ENCODE measurements at regions of chr18 and their contacts with region 1.

Region 1: DNA sequence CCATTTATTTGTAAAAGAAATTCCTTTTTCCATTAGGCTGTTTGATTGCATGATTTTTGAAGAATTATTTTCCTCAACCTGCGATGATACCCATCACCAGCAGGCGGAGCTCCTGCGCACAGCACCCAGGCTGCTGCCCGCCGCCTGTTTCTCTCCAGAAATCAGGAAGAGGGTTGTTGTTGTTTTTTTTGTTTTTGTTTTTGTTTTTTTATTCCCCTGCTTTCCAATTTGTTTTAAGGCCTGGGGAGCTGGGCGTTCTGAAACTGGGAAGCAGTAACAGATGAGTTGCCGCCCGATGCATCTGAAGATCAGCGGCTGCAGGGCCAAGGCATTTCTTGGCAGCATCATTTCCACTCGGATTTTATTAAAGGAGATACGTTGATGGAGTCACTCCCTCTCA is 132.1 kb downstream of the MBP start:
- DNase-seq: peak; percentile 24 to 71 (median 52)
- ATAC-seq: peak; percentile 66
- H3K4me3 ChIP-seq: no peak overlapping the region
- H3K4me3 Mint-ChIP-seq: no peak overlapping the region
- H3K27ac ChIP-seq: no peak overlapping the region
- H3K27ac Mint-ChIP-seq: no peak overlapping the region
- H3K4me1 ChIP-seq: peaks cover 19% of the 10 kb centered on the region
- H3K4me1 Mint-ChIP-seq: peaks cover 27% of the 10 kb centered on the region
- H3K27me3 ChIP-seq: no peaks in the 10 kb centered on the region
- H3K27me3 Mint-ChIP-seq: no peaks in the 10 kb centered on the region
- CTCF ChIP-seq: peak; percentile 97

Region 2: GRCh38 chr18:76265497-76266235 is 734.9 kb before region 1 on chr18:
- CTCF ChIA-PET with region 1: no interaction called
- POLR2A ChIA-PET with region 1: no interaction called
- intact Hi-C with region 1: no loop called
- DNase-seq: no peak
- ATAC-seq: no peak
- H3K4me3 ChIP-seq: no peak overlapping the region
- H3K4me3 Mint-ChIP-seq: no peak overlapping the region
- H3K27ac ChIP-seq: no peak overlapping the region
- H3K27ac Mint-ChIP-seq: no peak overlapping the region
- H3K4me1 ChIP-seq: no peaks in the 10 kb centered on the region
- H3K4me1 Mint-ChIP-seq: no peaks in the 10 kb centered on the region
- H3K27me3 ChIP-seq: no peaks in the 10 kb centered on the region
- H3K27me3 Mint-ChIP-seq: peaks cover 14% of the 10 kb centered on the region
- CTCF ChIP-seq: no peak

Region 3: GRCh38 chr18:77013811-77014521 is 13.4 kb after region 1 on chr18:
- CTCF ChIA-PET with region 1: interaction called, 30 read pairs
- POLR2A ChIA-PET with region 1: no interaction called
- intact Hi-C with region 1: no loop called
- DNase-seq: no peak
- ATAC-seq: no peak
- H3K4me3 ChIP-seq: no peak overlapping the region
- H3K4me3 Mint-ChIP-seq: no peak overlapping the region
- H3K27ac ChIP-seq: no peak overlapping the region
- H3K27ac Mint-ChIP-seq: peak overlapping the region; percentile 33
- H3K4me1 ChIP-seq: no peaks in the 10 kb centered on the region
- H3K4me1 Mint-ChIP-seq: peaks cover 37% of the 10 kb centered on the region
- H3K27me3 ChIP-seq: no peaks in the 10 kb centered on the region
- H3K27me3 Mint-ChIP-seq: no peaks in the 10 kb centered on the region
- CTCF ChIP-seq: no peak

Region 4: GRCh38 chr18:77054606-77055428 is 54.3 kb after region 1 on chr18:
- CTCF ChIA-PET with region 1: interaction called, 42 read pairs
- POLR2A ChIA-PET with region 1: interaction called, 4 read pairs
- intact Hi-C with region 1: loop called (anchors 1 kb)
- DNase-seq: peak; percentile 68 to 94 (median 86)
- ATAC-seq: peak; percentile 78
- H3K4me3 ChIP-seq: peak overlapping the region; percentile 35 to 44
- H3K4me3 Mint-ChIP-seq: peak overlapping the region; percentile 71
- H3K27ac ChIP-seq: peak overlapping the region; percentile 80 to 95
- H3K27ac Mint-ChIP-seq: peak overlapping the region; percentile 98
- H3K4me1 ChIP-seq: peaks cover 64% of the 10 kb centered on the region
- H3K4me1 Mint-ChIP-seq: peaks cover 69% of the 10 kb centered on the region
- H3K27me3 ChIP-seq: no peaks in the 10 kb centered on the region
- H3K27me3 Mint-ChIP-seq: no peaks in the 10 kb centered on the region
- CTCF ChIP-seq: peak; percentile 53

Region 5: DNA sequence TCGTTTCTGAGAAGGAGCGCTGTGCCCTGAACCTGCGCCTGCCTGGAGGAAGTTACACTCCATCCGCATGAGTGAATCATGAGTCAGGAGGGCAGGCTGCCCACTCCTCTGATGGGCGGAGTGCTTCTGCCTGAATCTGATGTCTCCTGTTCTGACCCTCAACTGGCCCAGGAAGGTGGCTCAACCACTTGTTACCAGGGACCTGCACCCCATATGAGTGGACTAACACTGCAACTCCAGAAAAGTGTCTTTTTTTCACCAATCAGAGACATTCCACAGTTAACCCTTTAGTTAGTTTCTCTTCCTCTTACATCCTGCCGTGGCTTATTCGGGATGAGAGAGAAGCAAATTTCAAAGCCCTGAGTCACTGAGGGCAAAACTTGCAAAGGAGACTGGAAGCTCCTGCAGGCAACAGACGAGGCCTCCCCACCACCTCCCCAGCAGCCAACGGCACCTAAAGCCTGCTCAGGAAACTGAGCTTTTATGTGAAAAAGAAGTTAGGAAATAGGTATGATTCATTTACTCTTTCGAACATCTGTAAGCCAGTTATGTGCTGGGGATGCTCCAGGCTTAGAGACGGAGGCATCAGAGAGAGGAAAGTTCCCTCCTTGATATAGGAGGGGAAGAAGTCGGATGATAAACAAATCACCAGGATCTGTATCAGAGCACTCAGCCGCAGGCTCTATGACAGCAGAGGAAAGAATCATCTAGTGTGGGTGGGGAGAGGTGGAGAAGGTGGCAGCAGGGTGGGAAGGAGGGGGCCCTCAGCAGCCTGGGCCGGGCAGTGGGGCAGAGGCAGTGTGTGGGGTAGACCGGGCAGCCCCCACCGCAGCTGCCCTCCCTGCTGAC is 101.1 kb after region 1 on chr18:
- CTCF ChIA-PET with region 1: interaction called, 13 read pairs
- POLR2A ChIA-PET with region 1: no interaction called
- intact Hi-C with region 1: no loop called
- DNase-seq: peak in 7 of 9 experiments; percentile 28 to 74 (median 54)
- ATAC-seq: peak; percentile 15
- H3K4me3 ChIP-seq: peak overlapping the region; percentile 16 to 26
- H3K4me3 Mint-ChIP-seq: peak overlapping the region; percentile 79
- H3K27ac ChIP-seq: peak overlapping the region; percentile 63 to 87
- H3K27ac Mint-ChIP-seq: peak overlapping the region; percentile 99
- H3K4me1 ChIP-seq: peaks cover 94% of the 10 kb centered on the region
- H3K4me1 Mint-ChIP-seq: peaks cover 94% of the 10 kb centered on the region
- H3K27me3 ChIP-seq: no peaks in the 10 kb centered on the region
- H3K27me3 Mint-ChIP-seq: no peaks in the 10 kb centered on the region
- CTCF ChIP-seq: no peak

Region 6: DNA sequence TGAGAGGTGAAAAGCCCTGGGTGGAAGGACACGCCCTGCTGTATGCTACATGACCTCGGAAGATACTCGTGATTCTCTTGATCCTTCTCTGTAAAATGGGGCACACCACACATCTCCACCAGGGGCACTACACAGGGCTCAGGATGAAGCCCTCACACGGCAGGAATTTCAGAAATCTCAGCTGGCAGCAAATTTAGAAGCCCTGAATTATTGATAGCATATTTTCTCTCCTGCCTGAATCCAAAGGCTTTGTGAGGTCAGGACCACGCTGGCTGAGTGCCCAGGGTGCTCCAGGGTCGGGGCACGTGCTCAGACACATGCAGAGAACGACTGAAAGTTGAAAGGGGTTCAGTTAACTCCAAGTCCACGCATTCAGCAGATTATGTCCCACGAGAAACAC is 207.0 kb after region 1 on chr18:
- CTCF ChIA-PET with region 1: interaction called, 99 read pairs
- POLR2A ChIA-PET with region 1: no interaction called
- intact Hi-C with region 1: loop called (anchors 1 to 2 kb)
- DNase-seq: peak; percentile 29 to 80 (median 58)
- ATAC-seq: peak; percentile 93
- H3K4me3 ChIP-seq: no peak overlapping the region
- H3K4me3 Mint-ChIP-seq: peak overlapping the region; percentile 62
- H3K27ac ChIP-seq: no peak overlapping the region
- H3K27ac Mint-ChIP-seq: peak overlapping the region; percentile 34
- H3K4me1 ChIP-seq: peaks cover 40% of the 10 kb centered on the region
- H3K4me1 Mint-ChIP-seq: peaks cover 46% of the 10 kb centered on the region
- H3K27me3 ChIP-seq: no peaks in the 10 kb centered on the region
- H3K27me3 Mint-ChIP-seq: peaks cover 2% of the 10 kb centered on the region
- CTCF ChIP-seq: peak; percentile 57

Measured in CD8-positive, alpha-beta T cell (primary cell).